ENCODE measurements at regions of chr5 and their contacts with region 1.

Region 1: GRCh38 chr5:38193015-38193581 is 65.3 kb upstream of the EGFLAM start:
- DNase-seq: peak; percentile 29
- H3K4me3 ChIP-seq: no peak overlapping the region
- H3K27ac ChIP-seq: no peak overlapping the region
- H3K27me3 ChIP-seq: peaks cover 37% of the 10 kb centered on the region
- CTCF ChIP-seq: peak; percentile 93

Region 2: GRCh38 chr5:37837414-37838032 is 355.6 kb before region 1 on chr5:
- CTCF ChIA-PET with region 1: interaction called, 42 read pairs
- POLR2A ChIA-PET with region 1: no interaction called
- DNase-seq: peak; percentile 65
- H3K4me3 ChIP-seq: peak overlapping the region; percentile 74
- H3K27ac ChIP-seq: peak overlapping the region; percentile 70
- H3K27me3 ChIP-seq: peaks cover 3% of the 10 kb centered on the region
- CTCF ChIP-seq: peak; percentile 88